ENCODE measurements at regions of chr6 and their contacts with region 1.

Region 1: DNA sequence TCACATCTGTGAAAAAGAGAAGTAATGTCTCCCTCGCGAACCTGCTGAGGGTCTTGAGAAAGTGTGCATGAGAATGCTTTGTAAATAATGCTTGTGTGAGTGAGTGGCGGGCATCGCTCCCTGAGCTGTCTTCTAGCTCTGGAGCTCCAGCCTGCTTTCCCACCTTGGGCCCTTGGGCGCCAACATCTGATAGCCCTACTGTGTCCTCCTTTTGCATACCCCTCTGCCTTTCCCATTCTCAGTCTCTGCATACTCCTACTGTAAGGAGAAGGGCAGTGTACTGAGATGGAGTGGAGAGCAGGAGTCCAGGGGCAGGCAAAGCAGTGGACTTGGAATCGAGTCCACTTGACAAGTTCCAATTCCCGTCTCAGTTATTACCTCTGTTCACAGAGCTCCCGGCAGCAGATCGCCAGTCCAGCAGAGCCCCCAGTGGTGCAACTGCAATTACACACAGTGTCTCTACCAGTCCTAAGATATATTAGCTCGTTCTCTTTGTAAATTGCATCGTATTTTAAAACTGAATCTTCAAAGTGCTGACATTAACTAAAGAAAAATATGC is 847 bp upstream of the NCR2 start:
- DNase-seq: no peak
- ATAC-seq: no peak
- H3K4me3 Mint-ChIP-seq: peak overlapping the region; percentile 57
- H3K27ac Mint-ChIP-seq: peak overlapping the region; percentile 90
- H3K4me1 Mint-ChIP-seq: peaks cover 49% of the 10 kb centered on the region
- H3K27me3 Mint-ChIP-seq: no peaks in the 10 kb centered on the region
- CTCF ChIP-seq: no peak

Region 2: GRCh38 chr6:39508515-39508914 is 1826.0 kb before region 1 on chr6:
- CTCF ChIA-PET with region 1: no interaction called
- POLR2A ChIA-PET with region 1: no interaction called
- intact Hi-C with region 1: no loop called
- DNase-seq: no peak
- ATAC-seq: no peak
- H3K4me3 Mint-ChIP-seq: no peak overlapping the region
- H3K27ac Mint-ChIP-seq: no peak overlapping the region
- H3K4me1 Mint-ChIP-seq: no peaks in the 10 kb centered on the region
- H3K27me3 Mint-ChIP-seq: peaks cover 6% of the 10 kb centered on the region
- CTCF ChIP-seq: no peak

Region 3: DNA sequence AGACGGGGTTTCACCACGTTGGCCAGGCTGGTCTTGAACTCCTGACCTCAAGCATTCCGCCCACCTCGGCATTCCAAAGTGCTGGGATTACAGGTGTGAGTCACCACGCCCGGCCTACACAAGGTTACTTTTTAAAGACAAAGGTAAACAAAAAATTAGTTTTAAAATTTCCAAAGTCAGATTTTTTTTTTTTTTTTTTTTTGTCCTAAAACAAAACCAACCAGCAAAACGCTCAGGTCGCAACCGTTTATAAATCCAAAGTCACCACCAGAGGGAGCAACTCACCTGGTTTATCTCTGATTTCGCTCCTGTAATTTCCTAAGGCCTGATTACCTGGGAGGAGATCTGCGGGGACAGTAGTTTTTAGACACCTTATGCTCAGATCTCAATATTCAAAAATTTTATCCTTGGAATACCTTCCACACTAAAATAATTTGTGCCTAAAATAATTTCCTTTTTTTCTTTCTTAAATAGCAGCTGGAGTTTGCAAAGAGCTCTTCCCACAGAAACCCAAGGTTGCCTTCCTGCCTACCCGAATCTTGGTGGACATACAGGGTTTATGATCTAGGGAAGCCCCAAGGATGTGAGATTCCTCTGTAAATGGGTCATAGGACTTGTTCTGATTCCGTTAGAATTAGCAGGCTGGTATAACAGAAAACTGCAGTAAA is 28.2 kb before region 1 on chr6:
- CTCF ChIA-PET with region 1: interaction called, 12 read pairs
- POLR2A ChIA-PET with region 1: interaction called, 5 read pairs
- intact Hi-C with region 1: loop called (anchors 2 kb)
- DNase-seq: no peak
- ATAC-seq: no peak
- H3K4me3 Mint-ChIP-seq: no peak overlapping the region
- H3K27ac Mint-ChIP-seq: no peak overlapping the region
- H3K4me1 Mint-ChIP-seq: peaks cover 36% of the 10 kb centered on the region
- H3K27me3 Mint-ChIP-seq: no peaks in the 10 kb centered on the region
- CTCF ChIP-seq: peak; percentile 45